Activated CD4-positive, alpha-beta memory T cell treated with anti-CD3 and anti-CD28 coated beads, Interleukin-2, amount 10 ng/mL, durations not matched to agents 7 days and 5 days (primary cell): ENCODE measurements at regions of chr12 and their contacts with region 1.

Region 1: DNA sequence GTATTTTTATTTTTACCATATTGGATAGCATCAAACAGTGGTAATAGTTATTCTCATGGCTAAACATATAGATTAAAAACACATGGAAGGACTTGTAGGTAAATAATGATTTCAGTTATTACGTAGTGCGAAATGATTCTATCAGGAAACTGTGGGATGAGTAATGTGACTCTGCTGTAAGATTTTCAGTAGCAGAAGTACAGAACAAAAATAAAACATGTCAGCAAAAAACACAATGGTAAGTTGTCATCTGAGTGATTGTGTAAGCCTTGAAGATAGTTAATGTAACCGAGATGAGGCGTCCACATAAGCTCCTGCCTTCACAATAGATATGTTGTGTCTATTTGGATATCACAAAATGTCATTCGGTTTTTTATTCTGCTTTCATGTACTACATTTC is 99.8 kb downstream of the BORCS5 start:
- DNase-seq: no peak
- H3K4me3 Mint-ChIP-seq: peak overlapping the region; percentile 46
- H3K27ac Mint-ChIP-seq: peak overlapping the region; percentile 84
- H3K4me1 Mint-ChIP-seq: peaks cover 61% of the 10 kb centered on the region
- H3K27me3 Mint-ChIP-seq: no peaks in the 10 kb centered on the region

Region 2: DNA sequence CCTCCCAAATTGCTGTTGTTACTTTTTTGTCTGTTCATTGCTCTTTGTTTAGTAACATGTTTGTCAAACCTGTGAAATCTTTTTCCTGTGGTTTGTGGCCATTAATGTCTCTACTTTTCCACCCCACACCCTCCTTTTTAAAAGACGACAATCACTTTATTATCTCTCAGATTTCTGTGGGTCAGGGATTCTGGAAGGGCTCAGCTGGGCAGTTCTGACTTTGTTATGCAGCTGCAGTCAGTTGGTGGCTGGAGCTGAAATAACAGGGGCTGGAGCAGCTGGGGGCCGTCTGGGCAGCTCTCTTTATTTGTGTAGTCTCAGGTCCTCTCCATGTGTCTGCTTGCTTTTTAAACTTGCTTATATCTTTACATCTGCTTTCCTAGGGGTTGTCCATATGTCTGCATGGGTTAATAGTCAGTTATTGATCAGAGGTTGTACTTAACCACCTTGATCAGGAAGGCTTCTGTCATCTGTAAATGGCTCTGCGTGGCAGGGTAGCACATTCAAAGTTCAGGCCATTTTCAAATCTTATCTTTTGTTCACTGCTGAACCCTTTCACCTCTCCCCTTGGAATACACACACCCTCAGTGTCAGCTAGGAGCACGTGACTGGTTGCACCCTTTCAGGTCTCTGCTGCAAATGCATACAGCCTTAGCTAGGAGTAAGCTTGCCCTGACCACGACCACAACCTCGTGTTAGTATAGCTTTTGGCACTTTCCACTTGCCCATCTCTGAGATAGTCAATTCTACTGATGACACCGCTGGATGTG is 71.9 kb before region 1 on chr12:
- CTCF ChIA-PET with region 1: interaction called, 3 read pairs
- POLR2A ChIA-PET with region 1: interaction called, 22 read pairs
- DNase-seq: peak; percentile 85
- H3K4me3 Mint-ChIP-seq: peak overlapping the region; percentile 57
- H3K27ac Mint-ChIP-seq: peak overlapping the region; percentile 97
- H3K4me1 Mint-ChIP-seq: peaks cover 83% of the 10 kb centered on the region
- H3K27me3 Mint-ChIP-seq: no peaks in the 10 kb centered on the region

Region 3: DNA sequence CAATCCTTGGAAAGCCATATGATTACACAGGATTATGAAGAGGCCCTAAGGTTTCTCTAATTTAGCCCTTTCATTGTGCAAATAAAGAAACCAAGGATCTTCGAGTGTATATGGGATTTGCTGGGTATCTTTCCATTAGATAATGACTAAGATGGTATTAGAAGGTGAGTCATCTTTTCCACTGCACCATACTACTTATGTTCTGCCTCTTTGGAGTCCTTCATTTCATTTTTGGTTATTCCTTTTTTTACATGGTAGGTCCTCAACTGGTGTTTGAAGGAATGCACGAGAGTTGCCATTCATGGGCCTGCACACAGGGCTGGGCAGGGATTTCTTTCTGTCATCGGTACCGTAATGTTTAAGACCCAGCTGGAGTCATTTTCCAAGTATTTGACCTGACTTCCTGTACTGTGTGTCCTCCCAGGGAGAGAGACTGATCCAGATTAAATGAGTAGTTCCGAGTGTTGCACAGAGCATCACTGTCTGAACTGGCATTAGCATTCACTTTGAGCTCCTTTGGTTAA is 14.0 kb before region 1 on chr12:
- CTCF ChIA-PET with region 1: interaction called, 14 read pairs
- POLR2A ChIA-PET with region 1: interaction called, 90 read pairs
- DNase-seq: no peak
- H3K4me3 Mint-ChIP-seq: peak overlapping the region; percentile 39
- H3K27ac Mint-ChIP-seq: peak overlapping the region; percentile 98
- H3K4me1 Mint-ChIP-seq: peaks cover 91% of the 10 kb centered on the region
- H3K27me3 Mint-ChIP-seq: no peaks in the 10 kb centered on the region

Region 4: DNA sequence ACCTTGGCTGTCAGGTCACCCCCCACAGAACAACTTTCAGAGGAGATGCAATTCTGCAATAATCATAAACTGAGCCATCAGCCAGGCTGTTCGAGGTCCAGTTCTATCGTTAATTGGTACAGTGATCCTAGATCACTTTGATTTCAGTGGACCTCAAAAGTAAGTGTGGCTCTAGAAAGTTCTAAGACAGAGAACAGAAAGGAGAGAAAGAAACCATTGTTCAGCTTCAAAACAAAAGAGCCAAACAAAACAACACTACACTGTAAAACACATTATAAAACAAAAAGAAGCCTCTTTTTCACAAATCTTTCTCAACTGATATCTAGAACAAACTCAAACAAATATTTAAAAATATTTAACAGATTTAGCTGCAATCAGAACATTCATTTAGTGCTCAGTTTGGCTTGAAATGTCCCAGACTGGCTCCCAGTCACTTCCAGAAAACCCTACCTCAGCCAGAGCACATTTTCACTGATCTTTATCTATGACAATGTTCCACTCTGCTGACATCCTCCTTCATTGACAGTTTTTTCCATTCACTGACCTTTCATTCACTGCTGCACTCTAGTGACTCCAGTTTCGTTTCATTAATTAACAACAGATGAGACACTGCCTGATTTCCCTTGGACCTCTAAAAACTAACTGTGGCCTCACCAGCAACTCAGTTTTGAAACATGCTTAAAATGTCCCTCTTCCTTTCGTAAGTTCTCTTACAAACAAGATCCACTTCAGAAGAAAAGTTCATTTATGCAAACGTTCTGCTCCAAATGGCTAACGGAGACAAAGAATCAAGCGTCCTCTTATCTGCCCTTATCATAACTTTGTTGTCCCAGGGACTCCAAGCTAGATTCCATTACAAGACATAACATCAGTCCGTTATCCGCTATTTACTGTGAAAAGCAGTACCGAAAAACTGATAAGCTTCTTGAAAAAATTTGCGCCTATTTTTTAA is 49.2 kb after region 1 on chr12:
- CTCF ChIA-PET with region 1: interaction called, 6 read pairs
- POLR2A ChIA-PET with region 1: interaction called, 19 read pairs
- DNase-seq: no peak
- H3K4me3 Mint-ChIP-seq: peak overlapping the region; percentile 65
- H3K27ac Mint-ChIP-seq: peak overlapping the region; percentile 81
- H3K4me1 Mint-ChIP-seq: peaks cover 76% of the 10 kb centered on the region
- H3K27me3 Mint-ChIP-seq: no peaks in the 10 kb centered on the region